ENCODE measurements at regions of chr19 and their contacts with region 1.

Region 1: DNA sequence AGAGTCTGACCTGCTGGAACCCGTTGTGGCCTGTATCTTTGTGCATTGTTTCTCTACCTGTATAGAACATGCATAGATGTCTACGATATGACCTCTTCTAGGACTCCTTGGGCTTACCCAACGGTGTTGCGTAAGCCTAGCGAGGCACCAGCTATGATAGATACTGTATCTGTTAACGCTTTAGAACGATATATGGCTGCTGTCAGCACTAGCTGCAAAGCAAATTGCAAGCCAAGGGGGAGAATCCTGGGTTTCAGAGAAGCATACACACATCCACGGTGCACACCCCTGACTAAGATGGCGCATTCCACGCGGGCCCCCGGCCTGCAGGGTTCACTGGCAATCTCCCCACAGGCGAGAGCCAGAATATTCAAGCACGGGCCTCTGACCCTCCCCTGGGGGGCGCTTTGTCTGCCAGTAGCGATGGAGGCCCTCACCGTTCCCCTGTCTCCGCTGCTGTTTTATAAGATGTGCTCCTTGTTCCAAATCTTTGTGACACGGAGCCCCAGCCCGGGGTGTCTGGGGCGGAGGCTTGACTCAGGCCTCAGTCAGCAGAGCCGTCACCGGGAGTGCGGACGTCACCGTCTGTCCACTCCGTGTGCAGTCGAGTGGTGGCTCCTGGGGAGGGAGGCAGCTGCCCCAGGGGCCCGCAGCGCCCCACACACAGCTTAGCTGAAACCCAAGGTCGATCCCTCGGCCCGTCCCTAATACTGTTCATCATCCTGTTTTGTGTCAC is 12.9 kb upstream of the RPS15 start:
- DNase-seq: no peak
- ATAC-seq: no peak
- H3K4me3 ChIP-seq: no peak overlapping the region
- H3K27ac ChIP-seq: peak overlapping the region; percentile 80
- H3K4me1 ChIP-seq: peaks cover 41% of the 10 kb centered on the region
- H3K27me3 ChIP-seq: no peaks in the 10 kb centered on the region
- CTCF ChIP-seq: no peak
- EP300 ChIP-seq: no peak
- POLR2A ChIP-seq: peak in 1 of 2 experiments; percentile 33; a peak in 1 of 4 replicates
- RAD21 ChIP-seq: no peak

Region 2: GRCh38 chr19:1438035-1438932 is 13.0 kb after region 1 on chr19 and contains the start of gene RPS15:
- CTCF ChIA-PET with region 1: no interaction called
- POLR2A ChIA-PET with region 1: interaction called, 10 read pairs
- in situ Hi-C with region 1: no loop called
- intact Hi-C with region 1: no loop called
- DNase-seq: peak; percentile 91
- ATAC-seq: peak; percentile 86
- H3K4me3 ChIP-seq: peak within 1 kb of the TSS; percentile 86 to 89 (median 87)
- H3K27ac ChIP-seq: peak within 1 kb of the TSS; percentile 82
- H3K4me1 ChIP-seq: peaks cover 30% of the 10 kb centered on the region
- H3K27me3 ChIP-seq: no peaks in the 10 kb centered on the region
- CTCF ChIP-seq: peak; percentile 99
- EP300 ChIP-seq: 0 out of 4 replicates have a peak, but pooled peaks have one; percentile 20 to 56
- POLR2A ChIP-seq: peak; percentile 99
- RAD21 ChIP-seq: peak; percentile 83; the same call in 1 of the 2 replicates
- total RNA-seq, gene RPS15: 695 and 780 TPM in 2 replicates

Region 3: GRCh38 chr19:1503089-1503933 is 78.0 kb after region 1 on chr19:
- CTCF ChIA-PET with region 1: no interaction called
- POLR2A ChIA-PET with region 1: no interaction called
- in situ Hi-C with region 1: no loop called
- intact Hi-C with region 1: no loop called
- DNase-seq: no peak
- ATAC-seq: peak; percentile 59
- H3K4me3 ChIP-seq: peak overlapping the region in 1 of 3 experiments; percentile 51; a peak in 2 of 6 replicates
- H3K27ac ChIP-seq: no peak overlapping the region
- H3K4me1 ChIP-seq: peaks cover 25% of the 10 kb centered on the region
- H3K27me3 ChIP-seq: no peaks in the 10 kb centered on the region
- CTCF ChIP-seq: peak; percentile 86
- EP300 ChIP-seq: no peak
- POLR2A ChIP-seq: no peak
- RAD21 ChIP-seq: peak; percentile 50; the same call in 1 of the 2 replicates

Measured in HepG2 (cell line).